PC-9 (cell line): ENCODE measurements at regions of chr2 and their contacts with region 1.

Region 1: DNA sequence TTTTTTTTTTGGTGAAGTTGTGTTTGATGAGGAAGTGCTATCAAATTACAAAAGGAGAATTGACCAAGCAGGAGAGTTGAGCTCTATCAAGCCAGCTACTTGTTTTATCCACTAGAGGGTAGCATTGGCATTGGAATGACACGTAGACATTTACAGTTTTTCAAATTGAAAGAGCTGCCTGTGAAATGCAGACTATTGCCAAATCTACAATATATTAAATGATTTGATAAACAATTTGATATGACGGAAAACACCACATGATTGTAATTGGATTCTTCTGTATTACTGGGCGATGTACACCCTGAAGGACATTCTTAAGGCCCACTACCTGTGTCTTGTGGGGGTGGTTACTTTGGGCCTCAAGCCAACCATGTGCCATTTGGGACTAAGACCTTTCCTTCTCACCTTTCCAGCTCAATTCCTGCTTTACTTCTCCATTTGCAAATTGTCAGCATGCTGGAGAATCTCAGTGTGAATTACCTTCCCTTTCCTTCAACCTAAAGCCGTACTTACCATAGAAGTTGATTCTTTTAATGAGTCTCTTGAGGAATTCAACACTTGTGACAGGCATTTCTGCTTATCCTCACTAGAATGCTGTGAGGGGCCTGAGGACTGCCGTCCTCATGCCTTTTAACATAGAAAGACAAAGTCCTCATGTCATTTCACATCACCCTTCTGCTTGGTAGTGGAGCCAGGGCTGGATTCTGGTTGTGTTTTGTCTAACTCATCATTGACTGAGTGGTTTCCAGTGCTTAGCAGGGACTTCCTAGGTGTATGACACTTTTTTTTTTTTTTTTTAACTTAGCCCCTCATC is 134.8 kb upstream of the THUMPD2 start:
- DNase-seq: peak; percentile 29 to 68
- H3K4me3 ChIP-seq: no peak overlapping the region
- H3K27ac ChIP-seq: no peak overlapping the region
- H3K4me1 ChIP-seq: no peaks in the 10 kb centered on the region
- H3K27me3 ChIP-seq: no peaks in the 10 kb centered on the region
- CTCF ChIP-seq: peak; percentile 94

Region 2: DNA sequence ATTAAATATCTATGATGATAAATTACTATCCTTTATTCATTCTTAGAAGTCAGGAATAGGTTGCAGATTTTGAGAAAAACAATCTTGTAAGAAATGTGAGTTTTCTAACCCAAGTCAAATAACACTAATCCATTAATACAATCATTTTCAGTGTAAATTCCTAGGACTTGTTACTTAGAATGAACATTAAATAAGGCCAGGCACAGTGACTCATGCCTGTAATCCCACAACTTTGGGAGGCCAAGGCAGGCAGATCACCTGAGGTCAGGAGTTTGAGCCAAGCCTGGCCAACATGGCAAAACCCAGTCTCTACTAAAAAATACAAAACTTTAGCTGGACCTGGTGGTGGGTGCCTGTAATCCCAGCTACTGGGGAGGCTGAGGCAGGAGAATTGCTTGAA is 624.2 kb before region 1 on chr2:
- CTCF ChIA-PET with region 1: no interaction called
- POLR2A ChIA-PET with region 1: no interaction called
- intact Hi-C with region 1: no loop called
- DNase-seq: no peak
- H3K4me3 ChIP-seq: no peak overlapping the region
- H3K27ac ChIP-seq: no peak overlapping the region
- H3K4me1 ChIP-seq: no peaks in the 10 kb centered on the region
- H3K27me3 ChIP-seq: no peaks in the 10 kb centered on the region
- CTCF ChIP-seq: no peak

Region 3: DNA sequence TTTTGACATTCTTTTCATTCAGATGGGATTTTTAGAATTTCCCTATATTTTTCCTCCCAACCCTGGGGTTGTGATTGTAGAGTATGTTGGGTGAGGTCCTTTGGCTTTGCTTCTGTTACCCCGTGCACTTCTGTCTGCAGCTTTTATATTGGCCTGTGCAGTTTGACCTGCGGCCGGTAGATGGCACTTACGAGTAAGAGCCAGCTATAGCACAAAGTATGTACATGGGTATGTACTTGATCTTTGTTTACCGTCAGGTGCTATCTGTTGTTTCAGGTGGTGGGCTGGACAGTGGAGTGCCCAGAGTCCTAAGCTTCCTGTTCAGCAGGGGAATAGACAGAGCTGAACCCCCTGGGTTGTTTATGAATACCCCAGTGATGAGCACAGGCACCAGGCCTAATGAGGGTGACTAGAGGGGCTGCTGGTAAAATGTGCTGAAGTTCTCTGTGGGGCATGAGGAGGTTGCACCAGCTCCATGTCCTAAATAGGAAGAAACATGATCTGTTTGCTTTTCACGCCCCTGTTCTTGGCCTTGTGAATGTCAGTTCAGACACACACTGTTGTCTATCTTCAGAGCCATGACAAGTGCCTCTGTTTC is 75.9 kb before region 1 on chr2:
- CTCF ChIA-PET with region 1: interaction called, 10 read pairs
- POLR2A ChIA-PET with region 1: no interaction called
- intact Hi-C with region 1: loop called (anchors 1 kb)
- DNase-seq: peak; percentile 46 to 57
- H3K4me3 ChIP-seq: no peak overlapping the region
- H3K27ac ChIP-seq: no peak overlapping the region
- H3K4me1 ChIP-seq: no peaks in the 10 kb centered on the region
- H3K27me3 ChIP-seq: no peaks in the 10 kb centered on the region
- CTCF ChIP-seq: peak; percentile 99

Region 4: DNA sequence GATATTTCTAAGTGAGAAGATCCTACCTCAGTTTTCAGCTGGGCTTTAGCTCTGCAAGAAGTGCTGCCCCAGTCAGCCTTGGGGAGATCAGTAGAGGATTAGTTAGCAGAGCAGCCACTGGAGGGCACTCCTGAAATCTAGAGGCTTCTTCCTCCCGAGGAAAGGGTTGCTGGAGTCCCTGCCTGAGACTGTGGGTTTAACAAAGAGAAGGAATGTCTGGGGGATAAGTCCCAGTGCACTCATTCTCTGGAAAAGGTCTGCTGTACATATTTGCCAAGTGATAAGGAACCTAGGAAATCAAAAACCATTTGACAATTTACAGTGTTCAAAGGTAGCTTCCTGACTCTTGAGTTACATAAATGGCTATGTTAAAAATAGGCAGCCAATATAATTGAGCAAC is 330.8 kb after region 1 on chr2:
- CTCF ChIA-PET with region 1: interaction called, 6 read pairs
- POLR2A ChIA-PET with region 1: no interaction called
- intact Hi-C with region 1: loop called (anchors 5 kb)
- DNase-seq: peak; percentile 43 to 55
- H3K4me3 ChIP-seq: no peak overlapping the region
- H3K27ac ChIP-seq: no peak overlapping the region
- H3K4me1 ChIP-seq: no peaks in the 10 kb centered on the region
- H3K27me3 ChIP-seq: no peaks in the 10 kb centered on the region
- CTCF ChIP-seq: peak; percentile 78

Region 5: GRCh38 chr2:40760071-40760666 is 846.3 kb after region 1 on chr2:
- CTCF ChIA-PET with region 1: no interaction called
- POLR2A ChIA-PET with region 1: no interaction called
- intact Hi-C with region 1: loop called (anchors 1 kb)
- DNase-seq: peak; percentile 44 to 46
- H3K4me3 ChIP-seq: no peak overlapping the region
- H3K27ac ChIP-seq: no peak overlapping the region
- H3K4me1 ChIP-seq: no peaks in the 10 kb centered on the region
- H3K27me3 ChIP-seq: no peaks in the 10 kb centered on the region
- CTCF ChIP-seq: peak; percentile 95

Region 6: DNA sequence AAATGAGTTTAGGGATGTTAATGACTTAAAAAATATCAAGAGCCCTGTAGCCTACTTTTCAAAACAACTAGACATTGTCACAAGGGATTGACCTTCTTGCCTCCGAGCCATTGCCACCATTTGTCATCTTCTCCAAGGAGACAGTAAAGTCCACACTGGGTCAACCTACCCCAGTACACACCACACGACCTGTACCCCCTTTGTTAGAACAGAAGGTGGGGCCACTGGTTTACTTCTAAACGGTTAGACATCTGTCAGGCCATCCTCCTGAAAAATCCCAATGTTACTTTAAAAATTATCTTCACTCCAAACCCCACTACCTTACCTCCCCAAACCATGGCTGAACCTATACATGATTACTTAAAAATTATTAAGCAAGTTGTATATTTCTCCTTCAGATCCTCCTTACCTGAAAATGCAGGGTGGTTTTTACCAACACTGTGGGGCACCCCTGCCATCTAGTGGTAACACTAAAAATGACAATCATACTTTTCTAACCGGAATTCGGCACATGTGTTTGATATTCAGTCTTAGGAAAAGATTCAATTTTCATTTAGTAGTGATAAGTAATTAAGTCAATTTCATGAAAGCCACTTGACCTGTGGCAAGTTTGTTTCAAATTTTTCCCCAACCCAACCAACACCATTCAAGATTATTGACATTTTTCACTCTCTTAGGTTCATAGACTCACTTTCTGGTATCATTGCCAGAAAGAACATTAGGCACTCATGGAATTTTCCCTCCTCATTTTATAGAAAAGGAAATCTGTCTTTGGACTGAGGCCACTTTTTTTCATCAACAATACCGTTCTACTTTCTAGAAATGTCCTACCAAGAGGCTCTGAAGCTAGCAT is 1868.7 kb after region 1 on chr2:
- CTCF ChIA-PET with region 1: no interaction called
- POLR2A ChIA-PET with region 1: no interaction called
- intact Hi-C with region 1: loop called (anchors 1 kb)
- DNase-seq: peak in 1 of 2 experiments; percentile 24
- H3K4me3 ChIP-seq: no peak overlapping the region
- H3K27ac ChIP-seq: no peak overlapping the region
- H3K4me1 ChIP-seq: no peaks in the 10 kb centered on the region
- H3K27me3 ChIP-seq: peaks cover 26% of the 10 kb centered on the region; the same call in 1 of the 2 replicates
- CTCF ChIP-seq: peak; percentile 97